Activated T-helper 1 cell treated with anti-CD3 and anti-CD28 coated beads, Interleukin-12 subunit alpha, Interleukin-12 subunit beta, Interleukin-2, Interleukin-4 antibody, amounts not matched to agents 30 ng/mL and 10 ng/mL and 1 ng/mL, durations not matched to agents 14 hours and 24 hours and 36 hours (primary cell): ENCODE measurements at regions of chr14 and their contacts with region 1.

Region 1: DNA sequence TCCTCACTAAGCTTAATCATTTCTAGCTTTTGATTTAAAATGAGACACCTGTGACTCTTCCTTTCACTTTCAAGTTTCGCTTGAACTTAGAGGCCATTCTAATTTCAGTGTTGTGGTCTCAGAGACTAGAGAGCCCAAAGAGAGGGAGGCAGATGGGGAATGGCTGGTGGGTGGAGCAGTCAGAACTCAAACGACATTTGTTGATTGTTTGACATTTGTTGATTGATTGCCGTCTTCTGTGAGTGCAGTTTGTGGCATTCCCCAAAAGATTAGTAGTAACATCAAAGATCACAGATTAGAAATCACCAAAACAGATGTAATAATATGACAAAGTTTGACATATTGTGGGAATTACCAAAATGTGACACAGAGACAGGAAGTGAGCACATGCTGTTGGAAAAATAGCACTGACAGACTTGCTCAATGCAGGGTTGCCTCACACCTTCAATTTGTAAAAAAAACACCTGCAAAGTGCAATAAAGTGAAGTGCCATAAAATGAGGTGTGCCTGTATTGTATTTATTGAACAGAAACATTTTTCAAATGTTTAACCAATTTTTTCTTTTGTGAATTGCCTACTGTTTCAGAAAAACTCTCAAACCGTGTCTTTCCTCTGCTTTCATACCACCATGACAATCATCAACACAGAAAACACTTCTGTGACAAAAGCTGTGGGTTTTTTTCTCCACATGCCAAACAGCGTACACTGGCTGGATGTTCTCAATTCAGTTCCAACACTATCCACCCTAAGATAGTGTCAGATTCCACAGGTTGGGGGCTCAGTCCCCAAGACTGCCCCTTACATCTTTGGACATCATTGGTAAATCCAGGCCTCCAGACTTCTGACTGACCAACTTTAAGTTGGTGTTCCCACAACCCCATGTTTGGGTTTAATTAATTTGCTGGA is 376.3 kb upstream of the RGS6 start:
- DNase-seq: peak; percentile 60
- H3K4me3 Mint-ChIP-seq: peak overlapping the region; percentile 55
- H3K27ac Mint-ChIP-seq: peak overlapping the region; percentile 96
- H3K4me1 Mint-ChIP-seq: peaks cover 77% of the 10 kb centered on the region
- H3K27me3 Mint-ChIP-seq: no peaks in the 10 kb centered on the region

Region 2: GRCh38 chr14:70887207-70887681 is 668.7 kb before region 1 on chr14:
- intact Hi-C with region 1: loop called (anchors 5 kb)
- DNase-seq: no peak
- H3K4me3 Mint-ChIP-seq: peak overlapping the region; percentile 73
- H3K27ac Mint-ChIP-seq: peak overlapping the region; percentile 88
- H3K4me1 Mint-ChIP-seq: peaks cover 98% of the 10 kb centered on the region
- H3K27me3 Mint-ChIP-seq: no peaks in the 10 kb centered on the region

Region 3: DNA sequence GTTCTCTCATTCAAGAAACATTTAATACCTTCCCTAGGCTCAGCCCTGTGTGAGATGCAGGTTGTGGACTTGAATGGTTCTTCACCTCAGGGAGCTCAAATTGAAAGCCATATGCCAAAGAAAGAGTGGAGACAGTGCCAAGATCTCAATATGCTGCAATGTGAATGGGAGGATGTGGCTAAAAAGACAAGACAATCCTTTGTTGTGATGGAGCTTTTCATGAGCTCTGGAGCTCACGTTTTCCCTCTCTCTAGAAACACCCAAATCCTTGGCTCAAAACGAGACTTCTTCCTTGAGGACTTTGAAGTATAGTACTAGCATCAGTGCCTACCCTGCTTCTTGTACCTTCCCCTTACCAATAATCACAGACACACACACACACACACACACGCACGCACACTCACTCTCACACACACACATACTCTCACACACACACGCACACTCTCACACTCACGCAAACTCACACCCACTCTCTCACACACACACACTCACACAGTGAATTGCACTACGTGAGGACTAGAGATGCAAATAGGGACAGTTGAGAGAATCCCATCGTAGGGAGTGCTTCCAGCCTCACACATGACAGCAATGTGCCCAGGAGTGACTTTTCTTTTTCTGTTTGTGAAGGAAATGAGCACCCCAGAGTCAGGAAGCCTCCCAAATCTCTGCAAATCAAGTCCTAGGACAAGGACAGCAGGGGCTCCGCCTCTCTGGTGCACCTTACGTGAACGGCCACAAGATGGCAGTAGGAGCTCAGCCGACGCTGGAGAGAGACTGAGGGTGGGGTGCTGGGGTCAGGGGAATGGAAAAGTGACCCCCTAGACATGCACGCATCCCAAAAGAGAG is 417.2 kb before region 1 on chr14:
- intact Hi-C with region 1: loop called (anchors 1 kb)
- DNase-seq: peak; percentile 34
- H3K4me3 Mint-ChIP-seq: no peak overlapping the region
- H3K27ac Mint-ChIP-seq: peak overlapping the region; percentile 21
- H3K4me1 Mint-ChIP-seq: peaks cover 40% of the 10 kb centered on the region
- H3K27me3 Mint-ChIP-seq: peaks cover 2% of the 10 kb centered on the region

Region 4: GRCh38 chr14:71290960-71291466 is 264.9 kb before region 1 on chr14:
- intact Hi-C with region 1: loop called (anchors 1 kb)
- DNase-seq: no peak
- H3K4me3 Mint-ChIP-seq: peak overlapping the region; percentile 6
- H3K27ac Mint-ChIP-seq: peak overlapping the region; percentile 81
- H3K4me1 Mint-ChIP-seq: peaks cover 31% of the 10 kb centered on the region
- H3K27me3 Mint-ChIP-seq: peaks cover 7% of the 10 kb centered on the region

Region 5: GRCh38 chr14:71403656-71404055 is 152.3 kb before region 1 on chr14:
- intact Hi-C with region 1: loop called (anchors 1 kb)
- DNase-seq: peak; percentile 15
- H3K4me3 Mint-ChIP-seq: no peak overlapping the region
- H3K27ac Mint-ChIP-seq: peak overlapping the region; percentile 67
- H3K4me1 Mint-ChIP-seq: peaks cover 56% of the 10 kb centered on the region
- H3K27me3 Mint-ChIP-seq: no peaks in the 10 kb centered on the region

Region 6: DNA sequence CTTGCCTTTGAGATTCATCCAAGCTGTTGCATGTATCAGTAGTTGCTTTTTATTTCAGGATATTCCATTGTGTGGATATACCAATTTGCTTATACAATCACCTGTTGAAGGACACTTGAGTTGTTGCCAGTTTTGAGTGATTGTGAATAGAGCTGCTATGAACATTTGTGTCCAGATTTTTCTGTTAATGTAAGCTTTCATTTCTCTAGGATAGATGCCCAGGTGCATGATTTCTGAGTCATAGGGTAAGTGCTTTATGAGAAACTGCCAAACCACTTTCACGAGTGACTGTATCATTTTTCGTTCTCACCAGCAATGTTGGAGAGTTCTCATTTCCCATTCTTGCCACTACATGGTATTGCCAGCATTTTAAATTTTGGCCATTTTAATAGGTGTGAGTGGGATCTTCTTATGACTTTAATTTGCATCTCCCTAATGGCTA is 58.2 kb before region 1 on chr14:
- intact Hi-C with region 1: loop called (anchors 1 kb)
- DNase-seq: peak; percentile 5
- H3K4me3 Mint-ChIP-seq: no peak overlapping the region
- H3K27ac Mint-ChIP-seq: no peak overlapping the region
- H3K4me1 Mint-ChIP-seq: peaks cover 15% of the 10 kb centered on the region
- H3K27me3 Mint-ChIP-seq: no peaks in the 10 kb centered on the region

Region 7: DNA sequence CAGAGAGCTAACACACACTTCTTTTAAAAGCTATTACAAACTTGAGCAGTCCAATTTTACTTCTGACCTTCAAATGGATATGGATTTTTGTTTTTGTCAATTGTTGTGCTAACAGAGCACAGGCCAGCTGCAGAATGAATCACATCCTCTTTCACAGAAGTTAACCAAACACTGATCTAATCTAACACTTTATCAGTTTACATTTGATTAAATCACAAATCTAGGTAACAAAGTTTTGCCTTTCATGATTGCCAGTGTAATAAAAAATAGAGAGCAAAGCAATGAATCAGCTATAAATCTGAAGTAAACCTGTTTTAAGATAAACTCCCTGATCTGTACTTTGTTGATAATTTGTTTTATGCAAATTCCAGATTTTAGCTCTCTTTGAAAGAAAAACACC is 103.3 kb after region 1 on chr14:
- intact Hi-C with region 1: loop called (anchors 5 kb)
- DNase-seq: no peak
- H3K4me3 Mint-ChIP-seq: no peak overlapping the region
- H3K27ac Mint-ChIP-seq: peak overlapping the region; percentile 22
- H3K4me1 Mint-ChIP-seq: peaks cover 33% of the 10 kb centered on the region
- H3K27me3 Mint-ChIP-seq: no peaks in the 10 kb centered on the region